KBM-7 (cell line): ENCODE measurements at regions of chrX and their contacts with region 1.

Region 1: GRCh38 chrX:10189317-10190268 is 32.8 kb downstream of the CLCN4 start:
- DNase-seq: peak; percentile 83

Region 2: DNA sequence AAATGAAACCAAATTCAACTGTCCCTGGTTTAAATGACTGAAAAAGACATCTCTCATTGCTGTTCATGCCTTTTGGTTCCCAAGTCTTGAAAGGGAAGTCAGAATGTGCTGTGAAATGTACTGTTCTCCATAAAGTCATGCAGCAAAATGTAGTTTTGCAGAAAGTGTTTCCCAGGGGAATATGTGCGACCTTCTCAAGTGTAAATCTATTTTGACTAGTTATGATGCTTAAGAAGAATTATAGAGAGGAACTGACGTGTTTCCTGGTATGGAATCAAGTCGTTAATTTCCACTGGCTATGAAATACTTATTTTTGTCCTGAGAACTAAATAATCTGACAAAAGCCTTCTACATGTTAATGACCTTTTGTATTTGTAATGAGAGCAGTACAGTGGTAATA is 190.3 kb after region 1 on chrX:
- in situ Hi-C with region 1: no loop called
- DNase-seq: no peak

Region 3: DNA sequence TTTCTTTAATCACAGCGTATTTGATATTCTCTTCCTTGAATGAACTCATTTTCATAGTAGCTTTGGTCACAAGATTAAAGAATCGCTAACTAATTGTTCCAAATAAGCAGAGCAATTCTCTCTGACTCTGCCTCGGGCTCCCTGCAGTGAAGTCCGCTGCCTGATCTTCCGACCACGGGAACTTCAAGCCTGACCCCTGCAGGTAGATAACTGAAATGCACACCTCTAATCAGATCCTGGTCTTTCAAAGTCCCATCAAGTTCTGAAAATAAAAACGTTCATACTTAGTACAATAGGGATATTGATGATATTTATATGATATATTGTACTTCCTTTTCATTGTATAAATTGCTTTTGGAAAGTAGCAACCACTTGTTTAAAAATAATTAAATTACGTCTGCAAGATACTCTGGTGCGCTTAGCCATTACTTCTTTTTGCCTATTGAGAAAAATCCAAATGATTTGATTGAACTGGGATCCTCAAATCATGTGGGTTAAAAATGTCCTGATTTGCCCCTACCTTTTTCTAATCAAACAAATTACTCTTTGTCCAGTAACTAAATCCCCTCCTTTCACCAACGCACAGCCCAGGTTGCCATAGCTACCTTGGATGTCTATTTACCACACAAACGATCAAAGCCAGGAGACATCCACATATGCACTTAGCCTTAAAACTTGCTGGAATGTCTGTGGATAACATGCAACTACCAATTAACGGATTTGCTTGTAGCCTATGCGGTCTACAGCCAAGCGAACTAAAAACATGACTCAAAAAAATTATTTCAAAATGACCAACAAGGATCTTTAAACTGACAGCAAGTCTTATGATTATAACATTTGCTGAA is 426.6 kb after region 1 on chrX:
- in situ Hi-C with region 1: loop called (anchors 25 kb)
- DNase-seq: peak; percentile 46

Region 4: GRCh38 chrX:11143931-11144678 is 954.5 kb after region 1 on chrX:
- in situ Hi-C with region 1: loop called (anchors 25 kb)
- DNase-seq: peak; percentile 82